MCF 10A (cell line): ENCODE measurements at regions of chr6 and their contacts with region 1.

Region 1: GRCh38 chr6:27795697-27796494 is 116.3 kb downstream of the OR2B2 start:
- DNase-seq: peak; percentile 91
- H3K4me3 Mint-ChIP-seq: no peak overlapping the region
- H3K27ac Mint-ChIP-seq: no peak overlapping the region
- H3K4me1 Mint-ChIP-seq: peaks cover 5% of the 10 kb centered on the region
- H3K27me3 Mint-ChIP-seq: no peaks in the 10 kb centered on the region
- CTCF ChIP-seq: peak; percentile 79

Region 2: DNA sequence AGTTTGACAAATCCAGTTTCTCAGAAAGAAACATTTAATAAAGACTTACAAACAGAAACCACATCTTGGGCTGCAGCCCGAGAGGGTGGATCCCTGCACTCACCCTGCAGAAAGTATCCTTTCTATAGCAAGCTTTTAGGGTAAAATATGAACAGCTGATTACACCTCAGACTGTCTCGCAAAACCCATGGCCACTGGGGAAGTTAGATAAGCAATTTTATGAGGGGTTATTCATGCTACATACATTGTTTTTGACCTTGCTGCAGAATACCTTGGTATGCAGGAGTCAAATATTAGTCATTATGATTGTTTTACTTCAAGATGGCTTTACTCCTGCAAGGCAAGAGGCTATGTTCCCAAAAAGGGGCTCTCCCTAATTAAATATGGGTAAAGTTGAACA is 10.6 kb before region 1 on chr6:
- CTCF ChIA-PET with region 1: interaction called, 16 read pairs
- POLR2A ChIA-PET with region 1: interaction called, 4 read pairs
- intact Hi-C with region 1: no loop called
- DNase-seq: no peak
- H3K4me3 Mint-ChIP-seq: no peak overlapping the region
- H3K27ac Mint-ChIP-seq: no peak overlapping the region
- H3K4me1 Mint-ChIP-seq: no peaks in the 10 kb centered on the region
- H3K27me3 Mint-ChIP-seq: no peaks in the 10 kb centered on the region
- CTCF ChIP-seq: no peak